Dendritic cell treated with granulocyte-macrophage colony-stimulating factor and Interleukin-4, amounts not matched to agents 40 ng/mL and 50 ng/mL, for 4 days (primary cell): ENCODE measurements at regions of chrX and their contacts with region 1.

Region 1: GRCh38 chrX:81377329-81377728 is 175.4 kb downstream of the SH3BGRL start:
- H3K4me3 Mint-ChIP-seq: no peak overlapping the region
- H3K27ac Mint-ChIP-seq: no peak overlapping the region
- H3K4me1 Mint-ChIP-seq: peaks cover 5% of the 10 kb centered on the region
- H3K27me3 Mint-ChIP-seq: peaks cover 2% of the 10 kb centered on the region

Region 2: DNA sequence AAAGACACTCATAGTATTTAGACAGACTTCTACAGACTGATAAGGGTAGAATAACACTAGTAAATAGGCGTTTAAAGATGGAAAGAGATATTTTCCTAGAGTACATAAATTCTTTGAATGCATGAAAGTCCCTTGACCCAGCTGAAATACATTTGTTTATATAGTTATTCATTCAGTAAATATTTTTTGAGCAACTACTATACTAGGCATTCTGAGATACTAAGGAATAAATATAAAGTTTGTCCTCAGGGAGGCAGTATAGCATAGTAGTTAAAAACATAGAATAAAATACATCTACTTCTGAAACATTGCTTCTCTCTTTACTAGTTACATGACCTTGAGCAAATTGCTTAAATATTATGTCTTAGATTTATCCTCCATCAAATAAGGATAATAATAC is 203.0 kb before region 1 on chrX:
- intact Hi-C with region 1: loop called (anchors 1 kb)
- H3K4me3 Mint-ChIP-seq: no peak overlapping the region
- H3K27ac Mint-ChIP-seq: no peak overlapping the region
- H3K4me1 Mint-ChIP-seq: no peaks in the 10 kb centered on the region
- H3K27me3 Mint-ChIP-seq: no peaks in the 10 kb centered on the region